ENCODE measurements at regions of chr1 and their contacts with region 1.

Region 1: GRCh38 chr1:150876119-150876454 is 312 bp downstream of the ARNT start:
- DNase-seq: no peak
- H3K4me3 Mint-ChIP-seq: peak overlapping the region; percentile 96
- H3K27ac Mint-ChIP-seq: peak overlapping the region; percentile 94
- H3K4me1 Mint-ChIP-seq: peaks cover 25% of the 10 kb centered on the region
- H3K27me3 Mint-ChIP-seq: no peaks in the 10 kb centered on the region

Region 2: GRCh38 chr1:150363426-150364230 is 512.5 kb before region 1 on chr1 and contains the start of gene RPRD2:
- intact Hi-C with region 1: loop called (anchors 1 kb)
- DNase-seq: peak; percentile 100
- H3K4me3 Mint-ChIP-seq: peak within 1 kb of the TSS; percentile 89
- H3K27ac Mint-ChIP-seq: peak within 1 kb of the TSS; percentile 93
- H3K4me1 Mint-ChIP-seq: peaks cover 25% of the 10 kb centered on the region
- H3K27me3 Mint-ChIP-seq: peaks cover 2% of the 10 kb centered on the region
- total RNA-seq, gene RPRD2: 23.7 and 24.6 TPM in 2 replicates

Region 3: DNA sequence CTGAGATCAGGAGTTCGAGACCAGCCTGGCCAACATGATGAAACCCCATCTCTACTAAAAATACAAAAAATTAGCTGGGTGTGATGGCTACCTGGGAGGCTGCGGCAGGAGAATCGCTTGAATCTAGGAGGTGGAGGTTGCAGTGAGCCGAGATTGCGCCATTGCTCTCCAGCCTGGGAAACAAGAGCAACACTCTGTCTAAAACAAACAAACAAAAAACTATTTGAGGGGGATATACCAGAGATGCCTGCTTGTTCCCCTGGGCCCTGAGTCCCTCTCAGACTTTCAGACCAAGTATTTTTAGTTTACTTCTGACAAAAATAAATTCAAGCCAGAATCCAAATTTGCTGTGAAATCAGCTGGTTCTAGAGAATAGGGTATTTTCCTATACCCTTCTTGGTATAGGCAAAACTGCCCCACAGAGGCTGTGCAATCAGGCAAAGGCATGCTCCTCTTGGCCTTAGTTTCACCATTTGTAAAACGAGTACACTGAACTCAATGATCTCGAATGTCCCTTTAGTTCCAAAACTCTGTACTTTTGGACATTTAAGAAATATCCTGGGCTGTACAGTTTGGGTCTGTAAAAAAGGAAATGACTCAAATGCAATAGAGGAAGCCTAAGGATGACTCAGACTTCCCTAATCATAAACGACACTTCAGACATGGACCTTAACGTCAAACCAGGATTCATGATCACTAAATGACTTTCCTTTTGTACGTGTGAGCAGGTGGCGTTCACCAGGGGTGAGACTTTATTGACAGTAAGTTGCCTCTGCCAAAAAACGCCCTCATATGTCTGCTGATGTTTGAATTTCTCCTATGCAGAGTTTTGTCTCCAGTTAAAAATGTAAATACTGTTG is 262.8 kb before region 1 on chr1:
- intact Hi-C with region 1: loop called (anchors 1 kb)
- DNase-seq: peak; percentile 84
- H3K4me3 Mint-ChIP-seq: peak overlapping the region; percentile 78
- H3K27ac Mint-ChIP-seq: peak overlapping the region; percentile 95
- H3K4me1 Mint-ChIP-seq: peaks cover 55% of the 10 kb centered on the region
- H3K27me3 Mint-ChIP-seq: no peaks in the 10 kb centered on the region

Region 4: GRCh38 chr1:150841626-150842025 is 34.5 kb before region 1 on chr1:
- intact Hi-C with region 1: loop called (anchors 2 kb)
- DNase-seq: peak; percentile 78
- H3K4me3 Mint-ChIP-seq: peak overlapping the region; percentile 35
- H3K27ac Mint-ChIP-seq: peak overlapping the region; percentile 65
- H3K4me1 Mint-ChIP-seq: peaks cover 32% of the 10 kb centered on the region
- H3K27me3 Mint-ChIP-seq: no peaks in the 10 kb centered on the region

Region 5: DNA sequence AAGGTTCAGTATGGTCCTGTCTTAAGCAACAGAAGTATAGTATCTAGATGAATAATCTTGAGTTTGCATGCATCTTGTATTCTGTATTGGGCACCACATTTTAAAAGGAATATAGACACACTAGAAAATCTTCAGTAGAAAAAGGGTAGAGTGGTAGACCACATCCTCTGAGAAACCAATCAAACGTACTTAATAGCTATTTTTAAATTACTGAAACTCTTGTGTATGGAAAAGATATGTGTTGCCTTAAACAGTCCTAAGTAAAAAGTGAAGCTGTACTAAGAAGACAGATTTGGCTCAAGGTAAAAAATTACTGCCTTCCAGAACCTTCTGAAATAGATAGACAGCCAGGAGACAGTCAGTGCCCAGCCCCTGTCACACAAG is 13.9 kb after region 1 on chr1:
- intact Hi-C with region 1: loop called (anchors 1 kb)
- DNase-seq: no peak
- H3K4me3 Mint-ChIP-seq: peak overlapping the region; percentile 39
- H3K27ac Mint-ChIP-seq: peak overlapping the region; percentile 81
- H3K4me1 Mint-ChIP-seq: peaks cover 22% of the 10 kb centered on the region
- H3K27me3 Mint-ChIP-seq: no peaks in the 10 kb centered on the region

Region 6: DNA sequence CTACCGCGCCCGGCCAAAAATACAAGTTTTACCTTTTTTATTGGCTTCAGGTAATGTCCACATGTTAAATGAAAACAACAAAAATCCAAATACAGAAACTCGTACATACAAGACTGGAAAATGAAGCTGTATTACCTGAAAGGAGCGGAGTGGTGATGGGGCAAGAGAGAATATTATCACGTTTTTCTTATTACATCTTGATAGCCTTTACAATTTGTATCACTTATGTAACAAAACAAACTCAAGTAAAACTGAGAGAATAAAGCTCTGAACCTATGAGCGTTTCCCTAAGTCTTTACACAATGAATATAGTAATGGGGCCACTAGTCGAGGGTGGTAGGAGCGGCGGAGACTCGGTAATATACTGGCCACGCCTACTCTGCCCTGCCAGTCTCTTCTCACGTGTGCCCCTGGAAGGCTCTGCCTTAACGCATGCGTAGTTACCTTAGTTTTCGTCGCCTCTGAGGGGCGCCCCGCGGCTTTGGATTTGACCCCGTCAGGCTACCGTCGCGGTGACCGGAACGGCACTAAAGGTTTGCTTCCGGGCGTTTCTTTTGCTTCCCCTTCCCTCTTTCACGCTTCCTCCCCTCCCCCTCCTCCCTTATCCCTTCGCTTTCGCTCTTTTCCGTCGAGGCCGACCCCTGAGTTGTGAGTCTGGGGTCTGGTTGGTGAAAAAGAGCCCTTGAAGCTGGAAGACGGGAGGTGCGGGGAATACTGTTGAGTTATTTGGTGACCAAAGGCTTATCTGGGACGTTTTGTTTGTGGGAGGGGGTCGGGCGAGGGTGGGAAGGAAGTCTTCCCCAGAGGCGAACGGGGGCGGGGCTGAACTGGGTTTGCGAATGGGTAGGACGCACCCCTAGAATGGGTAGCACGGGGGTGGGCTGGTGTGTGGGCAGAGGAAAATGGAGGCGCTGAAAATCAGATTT is 50.0 kb after region 1 on chr1 and contains the start of gene SETDB1:
- intact Hi-C with region 1: loop called (anchors 1 kb)
- DNase-seq: peak; percentile 97
- H3K4me3 Mint-ChIP-seq: peak within 1 kb of the TSS; percentile 93
- H3K27ac Mint-ChIP-seq: peak within 1 kb of the TSS; percentile 97
- H3K4me1 Mint-ChIP-seq: peaks cover 28% of the 10 kb centered on the region
- H3K27me3 Mint-ChIP-seq: no peaks in the 10 kb centered on the region
- total RNA-seq, gene SETDB1: 56.2 and 62.3 TPM in 2 replicates

Region 7: DNA sequence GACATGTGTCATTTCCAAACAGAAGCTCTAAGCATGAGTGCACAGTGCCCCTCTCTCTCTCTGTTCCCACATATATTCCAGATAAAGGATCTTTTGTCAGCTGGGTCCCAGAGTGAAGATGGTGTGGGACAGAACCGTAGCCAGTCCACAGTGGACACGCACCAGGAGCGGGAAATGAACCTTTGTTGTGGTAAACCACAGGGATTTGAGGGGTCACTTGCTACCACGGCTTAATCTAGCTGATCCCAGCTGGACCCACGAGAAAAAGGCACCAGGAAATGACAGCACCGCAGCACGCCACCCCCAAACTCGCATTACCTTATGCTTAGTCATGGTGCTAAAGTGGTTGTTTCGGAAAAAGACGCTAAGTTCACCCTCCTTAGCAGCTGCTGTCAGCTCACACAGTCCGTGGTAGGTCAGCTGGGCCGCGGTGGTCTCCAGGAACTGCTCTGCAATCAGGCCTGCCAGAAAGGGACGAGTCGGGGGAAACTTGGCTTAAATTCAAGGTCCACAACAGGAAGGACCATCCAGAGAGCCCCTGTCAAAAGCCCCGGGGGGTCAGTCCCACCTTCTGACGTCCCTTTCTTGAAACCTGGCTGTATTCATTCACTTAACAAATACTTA is 123.1 kb after region 1 on chr1:
- intact Hi-C with region 1: no loop called
- DNase-seq: no peak
- H3K4me3 Mint-ChIP-seq: no peak overlapping the region
- H3K27ac Mint-ChIP-seq: no peak overlapping the region
- H3K4me1 Mint-ChIP-seq: peaks cover 37% of the 10 kb centered on the region
- H3K27me3 Mint-ChIP-seq: no peaks in the 10 kb centered on the region

Region 8: GRCh38 chr1:151059078-151059907 is 183.2 kb after region 1 on chr1 and contains the start of gene CDC42SE1:
- intact Hi-C with region 1: loop called (anchors 5 kb)
- DNase-seq: peak; percentile 96
- H3K4me3 Mint-ChIP-seq: peak within 1 kb of the TSS; percentile 99
- H3K27ac Mint-ChIP-seq: peak within 1 kb of the TSS; percentile 99
- H3K4me1 Mint-ChIP-seq: peaks cover 63% of the 10 kb centered on the region
- H3K27me3 Mint-ChIP-seq: no peaks in the 10 kb centered on the region
- total RNA-seq, gene CDC42SE1: 189 and 190 TPM in 2 replicates

Measured in activated CD4-positive, alpha-beta T cell treated with anti-CD3 and anti-CD28 coated beads, Interleukin-2, amount 10 ng/mL, durations not matched to agents 24 days and 14 days (primary cell).